MCF 10A (cell line): ENCODE measurements at regions of chr5 and their contacts with region 1.

Region 1: DNA sequence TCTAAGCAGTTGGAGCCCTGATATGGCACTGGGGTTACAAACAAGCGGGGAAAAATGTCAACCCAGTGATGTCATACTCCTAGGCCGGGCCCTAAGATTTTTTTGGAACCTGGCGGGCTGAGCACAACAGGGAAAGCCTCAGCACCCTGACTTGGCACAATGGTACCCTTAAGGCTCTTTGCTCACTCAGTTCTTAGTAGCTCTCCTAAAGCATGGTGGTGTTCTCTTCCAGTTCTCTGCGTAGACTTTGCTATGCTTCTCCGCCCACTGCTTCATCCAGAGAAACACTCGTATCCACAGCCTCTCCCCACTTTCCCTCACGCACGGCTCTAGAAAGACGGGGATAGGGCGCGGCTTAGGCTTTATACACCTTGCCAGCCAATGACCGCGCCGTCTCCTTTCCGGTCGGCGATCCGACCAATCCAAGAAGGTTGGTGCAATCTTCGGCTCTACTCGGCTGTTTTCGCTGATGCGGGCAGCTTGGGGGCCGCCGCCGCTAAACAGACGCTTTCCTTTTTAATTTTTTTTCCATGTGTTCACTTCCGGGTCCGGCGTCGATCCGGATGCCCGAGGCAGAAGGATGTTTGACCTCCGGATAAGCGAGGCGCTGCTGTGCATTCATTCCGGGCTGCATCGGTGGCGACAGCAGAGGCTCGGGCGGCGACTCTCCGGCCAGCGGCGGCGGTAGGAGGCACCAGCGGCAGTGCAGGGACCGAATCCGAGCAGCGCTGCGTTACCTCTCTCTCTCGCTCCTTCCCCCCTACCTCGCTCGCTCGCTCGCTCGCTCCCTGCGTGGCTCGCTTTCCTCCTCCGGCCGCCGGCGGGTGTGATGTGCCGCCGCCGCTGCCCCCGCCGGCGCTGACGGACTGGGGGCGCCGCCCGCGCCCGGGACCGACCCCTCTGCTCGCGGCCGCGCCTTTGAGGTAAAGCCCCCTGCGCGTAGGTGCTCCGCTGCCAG is at the start of gene CSNK1G3:
- DNase-seq: peak; percentile 99
- H3K4me3 Mint-ChIP-seq: peak within 1 kb of the TSS; percentile 91
- H3K27ac Mint-ChIP-seq: peak within 1 kb of the TSS; percentile 97
- H3K4me1 Mint-ChIP-seq: peaks cover 39% of the 10 kb centered on the region
- H3K27me3 Mint-ChIP-seq: no peaks in the 10 kb centered on the region
- CTCF ChIP-seq: no peak
- total RNA-seq, gene CSNK1G3: 92.8 and 110 TPM in 2 replicates

Region 2: DNA sequence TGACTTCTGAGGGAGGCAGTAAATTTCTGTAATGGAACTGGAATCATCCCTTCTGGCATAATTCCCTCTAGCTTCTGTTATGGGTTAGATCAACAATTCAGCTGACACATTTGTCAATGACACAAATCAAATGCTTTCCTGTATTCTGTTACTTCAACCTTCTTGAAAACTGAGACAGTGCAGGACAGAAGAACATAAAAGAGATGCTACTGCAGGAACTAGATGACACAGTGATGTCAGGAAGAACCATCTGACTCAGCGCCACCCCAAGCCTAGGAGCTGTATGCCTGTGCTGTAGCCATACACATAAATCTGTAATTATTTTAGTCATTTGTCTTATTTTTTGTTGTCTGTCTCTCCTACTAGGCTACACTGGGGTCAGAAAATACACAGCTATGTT is 70.5 kb before region 1 on chr5:
- CTCF ChIA-PET with region 1: no interaction called
- POLR2A ChIA-PET with region 1: interaction called, 16 read pairs
- intact Hi-C with region 1: no loop called
- DNase-seq: no peak
- H3K4me3 Mint-ChIP-seq: no peak overlapping the region
- H3K27ac Mint-ChIP-seq: no peak overlapping the region
- H3K4me1 Mint-ChIP-seq: peaks cover 12% of the 10 kb centered on the region
- H3K27me3 Mint-ChIP-seq: no peaks in the 10 kb centered on the region
- CTCF ChIP-seq: no peak

Region 3: GRCh38 chr5:123486951-123487655 is 24.8 kb before region 1 on chr5:
- CTCF ChIA-PET with region 1: interaction called, 9 read pairs
- POLR2A ChIA-PET with region 1: interaction called, 54 read pairs
- intact Hi-C with region 1: no loop called
- DNase-seq: peak; percentile 72
- H3K4me3 Mint-ChIP-seq: peak overlapping the region; percentile 45
- H3K27ac Mint-ChIP-seq: peak overlapping the region; percentile 72
- H3K4me1 Mint-ChIP-seq: peaks cover 24% of the 10 kb centered on the region
- H3K27me3 Mint-ChIP-seq: no peaks in the 10 kb centered on the region
- CTCF ChIP-seq: no peak

Region 4: GRCh38 chr5:123527190-123527589 is 15.3 kb after region 1 on chr5:
- CTCF ChIA-PET with region 1: interaction called, 3 read pairs
- POLR2A ChIA-PET with region 1: interaction called, 139 read pairs
- intact Hi-C with region 1: no loop called
- DNase-seq: no peak
- H3K4me3 Mint-ChIP-seq: no peak overlapping the region
- H3K27ac Mint-ChIP-seq: no peak overlapping the region
- H3K4me1 Mint-ChIP-seq: peaks cover 29% of the 10 kb centered on the region
- H3K27me3 Mint-ChIP-seq: no peaks in the 10 kb centered on the region
- CTCF ChIP-seq: no peak

Region 5: DNA sequence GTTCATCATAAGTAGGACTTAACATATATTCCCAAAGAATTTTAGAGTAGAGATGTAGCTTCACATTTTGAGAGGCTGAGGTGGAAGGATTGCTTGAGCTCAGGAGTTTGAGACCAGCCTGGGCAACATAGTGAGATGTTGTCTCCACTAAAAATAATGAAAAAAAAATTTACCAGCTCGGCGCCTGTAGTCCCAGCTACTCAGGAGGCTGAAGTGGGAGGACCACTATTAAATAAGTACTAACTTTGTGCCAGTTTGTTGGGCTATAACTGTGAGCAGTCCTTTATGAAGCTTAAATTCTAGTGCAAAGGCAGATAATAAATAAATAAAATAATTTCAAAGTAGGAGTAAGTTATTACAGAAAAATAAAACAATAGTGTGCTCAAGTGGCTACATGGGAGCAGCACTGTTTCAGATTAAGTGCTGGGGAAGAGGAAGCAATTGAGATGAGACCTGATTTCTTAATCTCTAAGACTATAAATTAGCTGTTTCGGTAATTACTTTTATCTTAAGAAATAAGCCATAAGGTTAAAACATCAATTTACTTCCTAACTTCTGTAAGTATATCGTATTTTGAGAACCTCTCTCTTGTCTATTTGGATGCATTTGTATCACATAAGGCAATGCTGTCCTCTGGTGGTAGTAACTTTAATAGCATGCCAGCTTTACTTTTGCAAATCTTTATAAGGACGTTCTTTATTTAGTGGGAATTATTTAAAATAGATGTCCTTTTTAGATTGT is 98.9 kb after region 1 on chr5:
- CTCF ChIA-PET with region 1: interaction called, 3 read pairs
- POLR2A ChIA-PET with region 1: interaction called, 12 read pairs
- intact Hi-C with region 1: loop called (anchors 1 kb)
- DNase-seq: peak; percentile 76
- H3K4me3 Mint-ChIP-seq: no peak overlapping the region
- H3K27ac Mint-ChIP-seq: no peak overlapping the region
- H3K4me1 Mint-ChIP-seq: no peaks in the 10 kb centered on the region
- H3K27me3 Mint-ChIP-seq: no peaks in the 10 kb centered on the region
- CTCF ChIP-seq: peak; percentile 96

Region 6: GRCh38 chr5:123708074-123708806 is 196.3 kb after region 1 on chr5:
- CTCF ChIA-PET with region 1: no interaction called
- POLR2A ChIA-PET with region 1: no interaction called
- intact Hi-C with region 1: no loop called
- DNase-seq: peak; percentile 87
- H3K4me3 Mint-ChIP-seq: peak overlapping the region; percentile 10
- H3K27ac Mint-ChIP-seq: peak overlapping the region; percentile 95
- H3K4me1 Mint-ChIP-seq: peaks cover 42% of the 10 kb centered on the region
- H3K27me3 Mint-ChIP-seq: no peaks in the 10 kb centered on the region
- CTCF ChIP-seq: no peak